ENCODE measurements at regions of chr2 and their contacts with region 1.

Region 1: DNA sequence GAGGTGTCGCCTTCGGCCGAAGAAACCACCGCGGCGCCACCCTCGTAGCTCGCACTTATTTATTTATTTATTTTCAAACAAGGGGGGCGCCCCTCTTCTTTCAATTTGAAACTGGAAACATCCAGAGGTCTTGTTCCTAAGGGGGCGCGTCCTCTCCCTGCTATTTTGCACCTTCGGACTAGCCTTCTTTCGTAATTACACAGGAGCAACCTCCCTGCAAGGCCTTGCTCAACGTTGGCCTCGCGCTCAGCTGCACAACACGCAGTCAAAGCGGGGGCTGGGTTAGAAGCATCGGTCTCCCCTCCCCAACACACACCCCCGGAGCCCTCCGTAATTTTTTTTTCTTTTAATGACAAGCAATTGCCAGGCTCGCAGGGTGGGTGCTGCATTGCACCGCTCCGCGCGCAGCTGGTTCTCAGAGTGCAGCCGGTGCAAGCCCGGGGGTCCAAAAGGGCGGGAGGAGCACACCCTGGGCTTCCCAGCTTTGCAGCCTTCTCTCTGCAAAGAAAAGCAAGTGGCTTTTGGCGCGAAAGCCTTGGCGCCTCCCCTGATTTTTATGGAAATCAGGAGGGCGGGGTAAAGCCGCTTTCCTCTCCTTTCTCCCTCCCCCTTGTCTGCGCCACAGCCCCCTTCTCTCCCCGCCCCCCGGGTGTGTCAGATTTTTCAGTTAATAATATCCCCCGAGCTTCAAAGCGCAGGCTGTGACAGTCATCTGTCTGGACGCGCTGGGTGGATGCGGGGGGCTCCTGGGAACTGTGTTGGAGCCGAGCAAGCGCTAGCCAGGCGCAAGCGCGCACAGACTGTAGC is at the start of gene MYCN:
- DNase-seq: peak; percentile 56
- H3K4me3 Mint-ChIP-seq: peak within 1 kb of the TSS; percentile 58
- H3K27ac Mint-ChIP-seq: no peak within 1 kb of the TSS
- H3K4me1 Mint-ChIP-seq: peaks cover 2% of the 10 kb centered on the region
- H3K27me3 Mint-ChIP-seq: peaks cover 65% of the 10 kb centered on the region
- total RNA-seq, gene MYCN: 0.12 TPM in 1 of 2 replicates, not detected in the other

Region 2: DNA sequence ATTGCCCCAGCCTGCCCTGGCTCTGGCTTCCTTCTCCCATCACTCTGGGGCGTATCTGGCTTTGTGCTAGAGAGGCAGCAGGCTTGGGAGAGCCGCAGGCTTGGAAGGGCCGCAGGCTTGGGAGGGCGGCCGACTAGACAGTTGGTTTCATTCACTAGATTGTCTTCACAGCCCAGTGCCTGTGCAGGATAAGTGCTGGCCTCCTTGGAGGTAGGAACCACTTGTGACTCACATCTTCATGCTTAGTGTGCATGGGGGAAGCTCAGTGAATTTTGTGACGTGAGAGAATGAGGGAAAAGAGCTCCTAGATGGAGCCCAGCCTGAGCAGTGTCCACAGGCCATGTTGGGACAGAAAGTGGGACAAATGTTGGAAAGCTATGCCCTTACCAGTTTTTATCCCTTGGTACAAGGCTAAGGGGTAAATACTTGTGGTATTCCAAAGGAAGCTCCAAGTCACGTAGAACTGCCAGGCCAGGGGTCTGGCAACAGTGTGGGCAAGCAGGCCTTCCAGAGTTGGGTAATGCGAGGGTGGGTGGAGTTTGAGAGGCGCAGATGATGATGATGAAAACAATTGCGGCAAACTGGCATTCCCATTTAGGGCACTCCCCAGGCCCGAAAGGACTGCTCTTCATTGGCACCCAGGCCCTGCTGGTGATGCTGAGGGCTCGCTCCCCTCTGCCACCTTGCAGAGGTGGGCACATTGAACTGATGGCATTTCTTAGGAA is 248.3 kb before region 1 on chr2:
- intact Hi-C with region 1: no loop called
- DNase-seq: no peak
- H3K4me3 Mint-ChIP-seq: no peak overlapping the region
- H3K27ac Mint-ChIP-seq: no peak overlapping the region
- H3K4me1 Mint-ChIP-seq: no peaks in the 10 kb centered on the region
- H3K27me3 Mint-ChIP-seq: peaks cover 2% of the 10 kb centered on the region

Region 3: GRCh38 chr2:16142383-16143361 is 202.6 kb after region 1 on chr2:
- intact Hi-C with region 1: loop called (anchors 5 kb)
- DNase-seq: peak; percentile 70
- H3K4me3 Mint-ChIP-seq: no peak overlapping the region
- H3K27ac Mint-ChIP-seq: no peak overlapping the region
- H3K4me1 Mint-ChIP-seq: no peaks in the 10 kb centered on the region
- H3K27me3 Mint-ChIP-seq: no peaks in the 10 kb centered on the region

Region 4: DNA sequence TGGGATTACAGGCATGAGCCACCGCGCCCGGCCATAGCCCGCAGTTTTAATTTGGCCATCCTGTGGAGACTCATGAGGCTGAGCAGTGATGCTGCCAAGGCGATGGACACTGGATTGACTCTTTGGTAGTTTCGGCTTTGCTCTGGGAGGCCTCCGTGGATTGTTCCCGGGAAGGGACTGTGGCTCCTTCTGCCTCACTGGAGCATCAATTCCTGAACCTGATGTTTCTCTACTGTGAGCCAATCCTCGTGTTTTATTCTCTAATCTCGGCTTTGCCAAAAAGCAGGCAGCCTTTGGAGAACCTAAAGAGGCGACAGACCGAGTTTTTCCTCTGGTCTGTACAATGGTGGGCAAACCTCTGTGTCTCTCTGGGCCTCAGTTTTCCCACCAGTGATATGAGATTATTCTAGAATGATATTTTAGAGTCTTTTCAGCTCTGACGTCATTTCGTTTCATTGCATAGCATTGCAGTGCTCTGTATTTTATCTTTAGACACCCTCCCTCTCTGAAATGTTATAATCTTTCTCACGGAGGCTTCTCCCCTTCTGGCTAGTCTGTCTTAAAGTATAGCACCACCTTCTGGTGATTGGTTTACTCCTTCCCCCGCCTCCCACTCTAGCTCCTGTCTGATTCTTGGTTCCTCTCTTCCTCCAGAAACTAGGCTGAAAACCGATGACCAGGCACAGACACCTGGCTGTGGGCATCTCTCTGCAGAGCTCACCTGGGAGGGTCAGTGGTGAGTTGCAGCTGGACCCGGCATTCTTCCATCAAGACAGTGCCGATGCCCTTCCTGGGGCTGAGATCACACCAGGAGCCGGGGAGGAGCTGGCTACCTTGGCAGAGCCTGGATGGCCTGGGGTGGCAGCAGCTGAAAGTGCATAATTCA is 341.6 kb after region 1 on chr2:
- intact Hi-C with region 1: loop called (anchors 2 kb)
- DNase-seq: no peak
- H3K4me3 Mint-ChIP-seq: no peak overlapping the region
- H3K27ac Mint-ChIP-seq: peak overlapping the region; percentile 1
- H3K4me1 Mint-ChIP-seq: no peaks in the 10 kb centered on the region
- H3K27me3 Mint-ChIP-seq: no peaks in the 10 kb centered on the region